ENCODE measurements at regions of chr4 and their contacts with region 1.

Region 1: GRCh38 chr4:73019462-73020047 is 50.0 kb downstream of the COX18 start:
- DNase-seq: no peak
- ATAC-seq: no peak
- H3K4me3 Mint-ChIP-seq: no peak overlapping the region
- H3K27ac Mint-ChIP-seq: no peak overlapping the region
- H3K4me1 Mint-ChIP-seq: peaks cover 2% of the 10 kb centered on the region
- H3K27me3 Mint-ChIP-seq: peaks cover 6% of the 10 kb centered on the region
- CTCF ChIP-seq: no peak

Region 2: GRCh38 chr4:72701987-72702819 is 317.4 kb before region 1 on chr4:
- CTCF ChIA-PET with region 1: no interaction called
- POLR2A ChIA-PET with region 1: no interaction called
- intact Hi-C with region 1: loop called (anchors 1 kb)
- DNase-seq: no peak
- ATAC-seq: no peak
- H3K4me3 Mint-ChIP-seq: peak overlapping the region; percentile 75
- H3K27ac Mint-ChIP-seq: no peak overlapping the region
- H3K4me1 Mint-ChIP-seq: no peaks in the 10 kb centered on the region
- H3K27me3 Mint-ChIP-seq: peaks cover 6% of the 10 kb centered on the region
- CTCF ChIP-seq: no peak

Region 3: DNA sequence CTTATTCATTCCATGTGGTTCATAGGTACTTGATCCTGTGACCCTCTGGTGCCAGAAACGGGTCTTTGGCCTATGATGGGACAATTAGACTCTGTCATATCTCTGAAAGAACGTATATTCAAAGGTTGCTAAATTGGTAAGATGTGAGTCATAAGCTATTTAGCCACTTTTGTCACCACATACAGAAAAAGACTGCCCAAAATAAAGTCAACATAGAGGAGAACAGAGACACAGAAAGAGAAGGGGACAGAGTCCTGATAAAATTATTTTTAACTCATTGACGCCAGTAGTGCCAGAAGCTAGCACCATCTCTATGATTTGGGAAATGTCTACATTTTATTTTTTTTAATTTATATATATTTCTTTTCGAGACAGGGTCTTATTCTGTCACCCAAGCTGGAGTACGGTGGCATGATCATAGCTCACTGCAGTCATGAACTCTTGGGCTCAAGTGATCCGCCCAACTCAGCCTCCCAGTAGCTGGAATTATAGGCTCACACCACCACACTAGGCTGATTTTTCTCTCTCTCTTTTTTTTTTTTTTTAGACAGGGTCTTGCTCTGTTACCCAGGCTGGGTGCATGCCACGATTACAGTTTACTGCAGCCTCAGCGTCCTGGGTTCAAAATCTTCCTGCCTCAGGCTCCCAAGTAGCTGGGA is 142.1 kb after region 1 on chr4:
- CTCF ChIA-PET with region 1: no interaction called
- POLR2A ChIA-PET with region 1: no interaction called
- intact Hi-C with region 1: no loop called
- DNase-seq: no peak
- ATAC-seq: no peak
- H3K4me3 Mint-ChIP-seq: no peak overlapping the region
- H3K27ac Mint-ChIP-seq: no peak overlapping the region
- H3K4me1 Mint-ChIP-seq: no peaks in the 10 kb centered on the region
- H3K27me3 Mint-ChIP-seq: no peaks in the 10 kb centered on the region
- CTCF ChIP-seq: no peak